ENCODE measurements at regions of chr16 and their contacts with region 1.

Region 1: GRCh38 chr16:50266337-50267091 is at the start of gene ADCY7:
- DNase-seq: peak; percentile 60 to 78 (median 73)
- H3K4me3 ChIP-seq: no peak within 1 kb of the TSS
- H3K27ac ChIP-seq: peak within 1 kb of the TSS; percentile 36 to 48
- H3K4me1 ChIP-seq: peaks cover 7% of the 10 kb centered on the region
- H3K27me3 ChIP-seq: no peaks in the 10 kb centered on the region
- CTCF ChIP-seq: no peak
- EP300 ChIP-seq: no peak
- POLR2A ChIP-seq: no peak
- total RNA-seq, gene ADCY7: 23.4 to 78.9 (median 39.5) TPM

Region 2: GRCh38 chr16:50313596-50314478 is 47.3 kb after region 1 on chr16:
- intact Hi-C with region 1: loop called in 1 of 4 experiments (anchors 10 kb)
- DNase-seq: peak in 4 of 5 donors; percentile 26 to 51 (median 37)
- H3K4me3 ChIP-seq: no peak overlapping the region
- H3K27ac ChIP-seq: no peak overlapping the region
- H3K4me1 ChIP-seq: peaks cover 18% of the 10 kb centered on the region
- H3K27me3 ChIP-seq: no peaks in the 10 kb centered on the region
- CTCF ChIP-seq: no peak
- EP300 ChIP-seq: no peak
- POLR2A ChIP-seq: no peak